ENCODE measurements at regions of chr17 and their contacts with region 1.

Region 1: DNA sequence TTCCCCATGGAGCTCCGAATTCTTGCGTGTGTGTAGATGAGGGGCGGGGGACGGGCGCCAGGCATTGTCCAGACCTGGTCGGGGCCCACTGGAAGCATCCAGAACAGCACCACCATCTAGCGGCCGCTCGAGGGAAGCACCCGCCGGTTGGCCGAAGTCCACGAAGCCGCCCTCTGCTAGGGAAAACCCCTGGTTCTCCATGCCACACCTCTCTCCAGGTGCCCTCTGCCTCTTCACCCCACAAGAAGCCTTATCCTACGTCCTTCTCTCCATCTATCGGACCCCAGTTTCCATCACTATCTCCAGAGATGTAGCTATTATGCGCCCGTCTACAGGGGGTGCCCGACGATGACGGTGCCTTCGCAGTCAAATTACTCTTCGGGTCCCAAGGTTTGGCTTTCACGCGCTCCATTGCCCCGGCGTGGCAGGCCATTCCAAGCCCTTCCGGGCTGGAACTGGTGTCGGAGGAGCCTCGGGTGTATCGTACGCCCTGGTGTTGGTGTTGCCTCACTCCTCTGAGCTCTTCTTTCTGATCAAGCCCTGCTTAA is 617 bp upstream of the SENP3 start:
- DNase-seq: peak; percentile 95

Region 2: GRCh38 chr17:7239091-7240027 is 321.7 kb before region 1 on chr17 and contains the start of gene PHF23:
- intact Hi-C with region 1: loop called (anchors 5 kb)
- DNase-seq: peak; percentile 100
- total RNA-seq, gene PHF23: 20.5 TPM

Region 3: GRCh38 chr17:7403977-7404736 is 156.9 kb before region 1 on chr17 and contains the start of gene TMEM256:
- intact Hi-C with region 1: loop called (anchors 1 kb)
- DNase-seq: peak; percentile 99
- total RNA-seq, gene TMEM256: 67.7 TPM

Region 4: GRCh38 chr17:7436351-7437206 is 124.5 kb before region 1 on chr17:
- intact Hi-C with region 1: loop called (anchors 2 kb)
- DNase-seq: peak; percentile 91

Region 5: GRCh38 chr17:7484067-7484918 is 76.8 kb before region 1 on chr17 and contains the start of gene POLR2A:
- intact Hi-C with region 1: loop called (anchors 2 kb)
- DNase-seq: peak; percentile 99
- total RNA-seq, gene POLR2A: 56.4 TPM

Region 6: GRCh38 chr17:7515911-7516610 is 45.0 kb before region 1 on chr17:
- intact Hi-C with region 1: loop called (anchors 2 kb)
- DNase-seq: no peak